Activated T-helper 1 cell treated with anti-CD3 and anti-CD28 coated beads, Interleukin-12 subunit alpha, Interleukin-12 subunit beta, Interleukin-2, Interleukin-4 antibody, amounts not matched to agents 30 ng/mL and 10 ng/mL and 1 ng/mL, durations not matched to agents 14 hours and 24 hours and 36 hours (primary cell): ENCODE measurements at regions of chr9 and their contacts with region 1.

Region 1: GRCh38 chr9:15142878-15143534 is 164.0 kb downstream of the TTC39B start:
- DNase-seq: peak; percentile 5
- H3K4me3 Mint-ChIP-seq: no peak overlapping the region
- H3K27ac Mint-ChIP-seq: no peak overlapping the region
- H3K4me1 Mint-ChIP-seq: peaks cover 10% of the 10 kb centered on the region
- H3K27me3 Mint-ChIP-seq: peaks cover 6% of the 10 kb centered on the region

Region 2: GRCh38 chr9:14400658-14400995 is 742.4 kb before region 1 on chr9:
- intact Hi-C with region 1: no loop called
- DNase-seq: no peak
- H3K4me3 Mint-ChIP-seq: no peak overlapping the region
- H3K27ac Mint-ChIP-seq: no peak overlapping the region
- H3K4me1 Mint-ChIP-seq: no peaks in the 10 kb centered on the region
- H3K27me3 Mint-ChIP-seq: no peaks in the 10 kb centered on the region

Region 3: DNA sequence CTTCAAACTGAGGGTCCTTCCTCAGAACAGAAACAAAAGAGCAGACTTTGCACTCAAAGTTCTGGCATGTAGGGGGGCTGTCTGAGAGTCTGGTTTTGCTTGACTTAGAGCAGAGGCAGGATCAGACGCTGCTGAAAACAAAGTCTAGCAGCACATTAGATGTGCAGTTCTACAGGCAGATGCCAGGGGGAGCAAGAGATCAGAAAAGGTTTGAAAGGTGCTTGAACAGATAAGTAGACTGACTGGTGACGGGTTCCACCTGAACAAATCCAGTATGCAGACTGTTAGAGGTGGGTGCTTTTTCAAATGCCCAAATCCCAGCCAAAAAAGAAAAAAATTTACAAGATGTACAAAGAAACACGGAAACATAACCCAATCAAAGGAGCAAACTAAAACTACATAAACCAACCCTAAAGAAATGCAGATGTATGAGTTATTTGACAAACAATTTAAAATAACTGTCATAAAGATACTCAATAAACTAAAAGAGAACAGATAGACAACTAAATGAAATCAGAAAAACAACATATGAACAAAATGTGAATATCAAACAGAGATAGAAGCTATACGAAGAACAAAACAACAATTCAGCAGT is 38.1 kb before region 1 on chr9:
- intact Hi-C with region 1: loop called (anchors 2 kb)
- DNase-seq: peak; percentile 17
- H3K4me3 Mint-ChIP-seq: no peak overlapping the region
- H3K27ac Mint-ChIP-seq: no peak overlapping the region
- H3K4me1 Mint-ChIP-seq: no peaks in the 10 kb centered on the region
- H3K27me3 Mint-ChIP-seq: peaks cover 21% of the 10 kb centered on the region